ENCODE measurements at regions of chr3 and their contacts with region 1.

Region 1: GRCh38 chr3:47522082-47522987 is 8.8 kb upstream of the ELP6 start:
- DNase-seq: peak; percentile 88 to 94 (median 90)
- H3K4me3 ChIP-seq: no peak overlapping the region
- H3K27ac ChIP-seq: no peak overlapping the region
- H3K4me1 ChIP-seq: peaks cover 0 to 4% (median 0%) of the 10 kb centered on the region in 3 donors
- H3K27me3 ChIP-seq: no peaks in the 10 kb centered on the region
- CTCF ChIP-seq: peak; percentile 98

Region 2: GRCh38 chr3:47781685-47782445 is 259.5 kb after region 1 on chr3 and contains the start of gene SMARCC1:
- intact Hi-C with region 1: loop called (anchors 10 kb)
- DNase-seq: peak; percentile 98 to 99 (median 99)
- H3K4me3 ChIP-seq: peak within 1 kb of the TSS; percentile 88 to 93 (median 90)
- H3K27ac ChIP-seq: peak within 1 kb of the TSS; percentile 95 to 97
- H3K4me1 ChIP-seq: no peaks in the 10 kb centered on the region
- H3K27me3 ChIP-seq: no peaks in the 10 kb centered on the region
- CTCF ChIP-seq: peak; percentile 22
- total RNA-seq, gene SMARCC1: 80.4 TPM

Region 3: DNA sequence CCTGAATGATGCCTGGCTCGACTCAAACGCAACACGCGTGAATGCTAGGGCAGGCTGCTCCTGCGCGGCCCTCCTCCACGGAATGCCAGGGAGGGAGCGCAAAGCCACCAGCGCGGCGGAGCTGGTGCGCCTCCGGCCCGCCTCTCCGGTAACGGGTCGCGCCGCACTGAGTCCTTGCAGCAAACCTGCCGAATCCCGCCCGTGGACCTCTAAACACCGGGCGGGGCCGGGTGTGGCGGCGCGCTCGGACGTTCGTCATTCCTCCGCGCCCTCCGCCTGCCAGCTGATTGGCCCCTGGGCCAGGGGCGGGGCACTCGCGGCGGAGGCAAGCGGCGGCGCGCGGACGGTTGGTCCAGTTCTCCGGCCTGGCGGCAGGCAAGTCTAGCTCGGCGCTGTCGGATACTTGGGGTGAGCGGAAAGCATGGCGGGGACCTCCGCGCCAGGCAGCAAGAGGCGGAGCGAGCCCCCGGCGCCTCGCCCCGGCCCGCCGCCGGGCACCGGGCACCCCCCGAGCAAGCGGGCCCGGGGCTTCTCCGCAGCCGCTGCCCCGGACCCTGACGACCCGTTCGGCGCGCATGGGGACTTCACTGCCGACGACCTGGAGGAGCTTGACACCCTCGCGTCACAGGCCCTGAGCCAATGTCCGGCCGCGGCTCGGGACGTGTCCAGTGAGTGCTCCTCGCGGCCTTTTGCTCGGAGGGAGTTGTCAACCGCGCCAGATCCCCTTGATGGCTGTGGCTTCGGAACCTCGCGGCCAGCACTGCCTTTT is 924.3 kb after region 1 on chr3 and contains the start of gene ATRIP:
- intact Hi-C with region 1: no loop called
- DNase-seq: peak; percentile 91 to 97 (median 94)
- H3K4me3 ChIP-seq: peak within 1 kb of the TSS; percentile 72 to 85 (median 80)
- H3K27ac ChIP-seq: peak within 1 kb of the TSS; percentile 35 to 80
- H3K4me1 ChIP-seq: peaks cover 4 to 15% (median 9%) of the 10 kb centered on the region in 3 donors
- H3K27me3 ChIP-seq: no peaks in the 10 kb centered on the region
- CTCF ChIP-seq: no peak
- total RNA-seq, gene ATRIP: 6.7 TPM

Measured in kidney (tissue), 22 donors.